CD4-positive, alpha-beta T cell (primary cell): ENCODE measurements at regions of chr15 and their contacts with region 1.

Region 1: GRCh38 chr15:76285239-76285825 is 25.9 kb downstream of the ETFA start:
- DNase-seq: peak in 4 of 14 experiments; percentile 8 to 39 (median 22)
- ATAC-seq: no peak
- H3K4me3 ChIP-seq: no peak overlapping the region
- H3K4me3 Mint-ChIP-seq: no peak overlapping the region
- H3K27ac ChIP-seq: no peak overlapping the region
- H3K27ac Mint-ChIP-seq: peak overlapping the region; percentile 90
- H3K4me1 ChIP-seq: peaks cover 9% of the 10 kb centered on the region
- H3K4me1 Mint-ChIP-seq: peaks cover 37% of the 10 kb centered on the region
- H3K27me3 ChIP-seq: no peaks in the 10 kb centered on the region
- H3K27me3 Mint-ChIP-seq: no peaks in the 10 kb centered on the region
- CTCF ChIP-seq: peak; percentile 52

Region 2: DNA sequence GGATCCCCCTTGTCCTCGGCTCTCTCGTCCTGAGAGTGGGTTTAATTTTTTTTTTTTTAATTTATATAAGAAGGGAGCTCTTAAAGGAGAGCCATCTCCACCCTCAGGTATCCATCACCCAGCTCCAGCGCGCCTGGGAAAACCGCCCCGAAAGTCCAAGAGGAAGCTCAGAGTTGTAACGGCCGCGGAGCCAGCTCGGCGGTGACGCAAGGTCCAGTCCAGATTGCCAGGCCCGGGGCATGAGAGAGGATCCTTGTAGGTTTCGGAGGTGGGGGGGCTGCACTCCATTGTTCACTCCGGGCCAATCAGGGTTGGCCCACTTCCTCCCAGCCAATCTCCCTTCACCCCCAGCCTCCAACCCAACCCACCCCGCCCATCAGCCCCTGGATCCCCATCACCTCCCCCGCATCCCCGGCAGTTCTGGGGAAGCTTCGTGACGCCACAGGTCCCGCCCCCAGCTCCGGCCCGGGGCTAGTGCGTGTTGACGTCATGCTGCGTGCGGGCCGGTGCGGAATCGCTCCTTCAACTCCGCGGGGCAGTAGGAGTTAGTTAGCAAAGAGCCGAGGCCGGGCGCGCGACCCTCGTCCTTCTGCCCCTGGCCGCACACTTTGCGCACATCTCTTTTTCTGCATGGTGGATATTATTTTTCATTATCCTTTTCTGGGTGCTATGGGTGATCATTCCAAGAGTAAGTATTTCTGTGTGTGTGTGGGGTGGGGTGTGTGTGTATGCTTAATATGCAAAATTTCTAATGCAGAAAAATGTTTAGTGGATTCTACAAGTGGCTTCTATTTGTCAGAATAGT is 51.1 kb after region 1 on chr15 and contains the start of gene ISL2:
- CTCF ChIA-PET with region 1: no interaction called
- POLR2A ChIA-PET with region 1: no interaction called
- intact Hi-C with region 1: loop called in 1 of 2 experiments (anchors 5 kb)
- DNase-seq: peak in 6 of 14 experiments; percentile 21 to 78 (median 61)
- ATAC-seq: no peak
- H3K4me3 ChIP-seq: peak within 1 kb of the TSS; percentile 42
- H3K4me3 Mint-ChIP-seq: peak within 1 kb of the TSS; percentile 78
- H3K27ac ChIP-seq: no peak within 1 kb of the TSS
- H3K27ac Mint-ChIP-seq: no peak within 1 kb of the TSS
- H3K4me1 ChIP-seq: peaks cover 66% of the 10 kb centered on the region
- H3K4me1 Mint-ChIP-seq: peaks cover 57% of the 10 kb centered on the region
- H3K27me3 ChIP-seq: peaks cover 83 to 86% of the 10 kb centered on the region in 2 experiments
- H3K27me3 Mint-ChIP-seq: peaks cover 87% of the 10 kb centered on the region
- CTCF ChIP-seq: no peak
- total RNA-seq, gene ISL2: not detected

Region 3: GRCh38 chr15:76346669-76347481 is 61.5 kb after region 1 on chr15:
- CTCF ChIA-PET with region 1: no interaction called
- POLR2A ChIA-PET with region 1: no interaction called
- intact Hi-C with region 1: no loop called
- DNase-seq: no peak
- ATAC-seq: no peak
- H3K4me3 ChIP-seq: peak overlapping the region; percentile 38
- H3K4me3 Mint-ChIP-seq: peak overlapping the region; percentile 13
- H3K27ac ChIP-seq: no peak overlapping the region
- H3K27ac Mint-ChIP-seq: no peak overlapping the region
- H3K4me1 ChIP-seq: peaks cover 32% of the 10 kb centered on the region
- H3K4me1 Mint-ChIP-seq: peaks cover 26% of the 10 kb centered on the region
- H3K27me3 ChIP-seq: peaks cover 50 to 65% of the 10 kb centered on the region in 2 experiments
- H3K27me3 Mint-ChIP-seq: peaks cover 60% of the 10 kb centered on the region
- CTCF ChIP-seq: no peak